Activated CD4-positive, alpha-beta T cell treated with anti-CD3 and anti-CD28 coated beads, Interleukin-2, amount 10 ng/mL, durations not matched to agents 24 days and 14 days (primary cell): ENCODE measurements at regions of chr19 and their contacts with region 1.

Region 1: GRCh38 chr19:6516659-6517291 is 14.1 kb upstream of the TNFSF9 start:
- DNase-seq: peak; percentile 97
- H3K4me3 Mint-ChIP-seq: peak overlapping the region; percentile 94
- H3K27ac Mint-ChIP-seq: peak overlapping the region; percentile 95
- H3K4me1 Mint-ChIP-seq: peaks cover 34% of the 10 kb centered on the region
- H3K27me3 Mint-ChIP-seq: no peaks in the 10 kb centered on the region

Region 2: GRCh38 chr19:6450166-6450565 is 66.6 kb before region 1 on chr19:
- intact Hi-C with region 1: no loop called
- DNase-seq: no peak
- H3K4me3 Mint-ChIP-seq: no peak overlapping the region
- H3K27ac Mint-ChIP-seq: no peak overlapping the region
- H3K4me1 Mint-ChIP-seq: peaks cover 2% of the 10 kb centered on the region
- H3K27me3 Mint-ChIP-seq: no peaks in the 10 kb centered on the region

Region 3: DNA sequence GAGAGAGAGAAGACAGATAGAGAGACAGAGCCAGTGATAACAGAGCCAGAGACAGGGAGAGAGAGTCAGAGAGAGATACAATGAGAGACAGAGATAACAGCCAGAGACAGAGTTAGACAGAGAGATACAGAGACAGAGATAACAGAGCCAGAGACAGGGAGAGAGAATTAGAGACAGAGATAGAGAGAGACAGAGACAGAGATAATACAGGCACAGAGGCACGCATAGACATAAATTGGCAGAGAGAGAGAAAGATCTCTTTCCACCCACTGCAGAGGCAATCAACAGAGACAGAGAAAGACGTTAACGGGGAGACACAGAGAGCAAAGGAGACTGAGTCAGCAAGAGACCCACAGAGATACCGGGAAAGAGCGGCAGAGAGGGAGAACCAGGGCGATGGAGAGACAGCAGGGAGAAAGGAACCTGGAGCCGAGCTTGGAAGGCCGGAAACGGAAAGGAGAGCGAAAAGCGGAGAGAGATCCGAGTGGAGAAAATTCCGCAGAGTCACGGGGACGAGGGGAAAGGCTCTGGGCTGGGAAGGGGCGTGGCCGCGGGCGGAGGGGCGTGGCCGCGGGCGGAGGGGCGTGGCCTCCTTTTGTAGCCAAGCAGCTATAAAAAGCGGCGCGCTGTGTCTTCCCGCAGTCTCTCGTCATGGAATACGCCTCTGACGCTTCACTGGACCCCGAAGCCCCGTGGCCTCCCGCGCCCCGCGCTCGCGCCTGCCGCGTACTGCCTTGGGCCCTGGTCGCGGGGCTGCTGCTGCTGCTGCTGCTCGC is 13.8 kb after region 1 on chr19 and contains the start of gene TNFSF9:
- intact Hi-C with region 1: loop called (anchors 1 kb)
- DNase-seq: peak; percentile 95
- H3K4me3 Mint-ChIP-seq: peak within 1 kb of the TSS; percentile 87
- H3K27ac Mint-ChIP-seq: peak within 1 kb of the TSS; percentile 84
- H3K4me1 Mint-ChIP-seq: peaks cover 31% of the 10 kb centered on the region
- H3K27me3 Mint-ChIP-seq: peaks cover 36% of the 10 kb centered on the region
- total RNA-seq, gene TNFSF9: 6.1 and 6.4 TPM in 2 replicates

Region 4: DNA sequence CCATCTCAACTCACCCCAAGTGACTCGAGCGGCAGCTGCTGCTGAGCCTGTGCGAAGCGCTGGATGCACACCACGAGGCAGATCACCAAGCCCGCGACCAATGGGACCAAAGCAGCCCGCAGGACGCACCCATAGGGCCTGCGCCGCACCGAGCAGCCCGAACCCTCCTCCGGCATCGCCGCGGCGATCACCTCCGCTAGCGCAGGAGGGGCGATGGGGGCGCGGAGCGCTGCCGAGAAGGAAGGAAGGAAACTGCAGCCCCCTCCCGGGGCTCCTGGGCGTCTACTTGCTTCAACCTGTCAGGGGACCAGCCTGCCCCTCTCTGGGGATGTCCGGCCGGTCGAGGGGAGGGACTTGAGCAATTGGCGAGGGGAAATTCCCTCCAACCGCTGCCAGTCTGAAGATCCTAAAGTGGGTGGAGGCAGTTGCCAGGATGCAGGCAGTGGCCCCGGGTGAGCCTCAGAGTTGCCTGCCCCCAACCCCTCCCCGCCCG is 74.1 kb after region 1 on chr19 and contains the start of gene CD70:
- intact Hi-C with region 1: loop called (anchors 2 kb)
- DNase-seq: peak; percentile 89
- H3K4me3 Mint-ChIP-seq: peak within 1 kb of the TSS; percentile 91
- H3K27ac Mint-ChIP-seq: peak within 1 kb of the TSS; percentile 79
- H3K4me1 Mint-ChIP-seq: peaks cover 60% of the 10 kb centered on the region
- H3K27me3 Mint-ChIP-seq: peaks cover 44% of the 10 kb centered on the region
- total RNA-seq, gene CD70: 46.8 and 47.4 TPM in 2 replicates

Region 5: DNA sequence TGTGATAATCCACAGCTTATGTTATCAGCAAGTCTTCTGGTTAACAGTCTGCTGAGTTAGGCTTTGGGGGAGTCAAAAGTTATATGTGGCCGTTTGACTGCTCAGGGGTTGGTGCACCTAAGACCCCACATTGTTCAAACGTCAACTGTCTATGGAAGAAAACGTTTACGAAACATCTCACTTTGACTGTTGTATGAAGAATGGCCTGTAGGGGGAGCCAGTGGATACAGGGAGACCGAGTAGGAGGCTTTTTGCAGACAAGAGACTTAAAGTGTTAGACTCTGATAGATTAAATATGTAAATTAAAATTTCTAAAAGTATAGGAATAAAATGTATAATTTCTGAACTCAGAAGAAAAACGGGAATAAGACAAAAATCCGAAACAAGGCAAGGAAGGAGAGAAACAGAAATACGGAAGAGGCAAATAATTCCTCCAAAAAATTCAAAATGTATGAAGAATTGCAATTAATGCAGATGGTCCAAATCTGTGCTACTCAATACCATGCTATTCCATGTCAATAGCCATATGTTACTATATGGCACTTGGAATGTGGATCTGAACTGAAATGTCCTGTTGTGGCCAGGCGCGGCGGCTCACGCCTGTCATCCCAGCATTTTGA is 115.3 kb after region 1 on chr19:
- intact Hi-C with region 1: loop called (anchors 1 kb)
- DNase-seq: peak; percentile 96
- H3K4me3 Mint-ChIP-seq: no peak overlapping the region
- H3K27ac Mint-ChIP-seq: no peak overlapping the region
- H3K4me1 Mint-ChIP-seq: peaks cover 26% of the 10 kb centered on the region
- H3K27me3 Mint-ChIP-seq: peaks cover 2% of the 10 kb centered on the region

Region 6: GRCh38 chr19:6753178-6754031 is 236.6 kb after region 1 on chr19:
- intact Hi-C with region 1: loop called (anchors 5 kb)
- DNase-seq: peak; percentile 95
- H3K4me3 Mint-ChIP-seq: peak overlapping the region; percentile 81
- H3K27ac Mint-ChIP-seq: peak overlapping the region; percentile 96
- H3K4me1 Mint-ChIP-seq: peaks cover 15% of the 10 kb centered on the region
- H3K27me3 Mint-ChIP-seq: no peaks in the 10 kb centered on the region

Region 7: DNA sequence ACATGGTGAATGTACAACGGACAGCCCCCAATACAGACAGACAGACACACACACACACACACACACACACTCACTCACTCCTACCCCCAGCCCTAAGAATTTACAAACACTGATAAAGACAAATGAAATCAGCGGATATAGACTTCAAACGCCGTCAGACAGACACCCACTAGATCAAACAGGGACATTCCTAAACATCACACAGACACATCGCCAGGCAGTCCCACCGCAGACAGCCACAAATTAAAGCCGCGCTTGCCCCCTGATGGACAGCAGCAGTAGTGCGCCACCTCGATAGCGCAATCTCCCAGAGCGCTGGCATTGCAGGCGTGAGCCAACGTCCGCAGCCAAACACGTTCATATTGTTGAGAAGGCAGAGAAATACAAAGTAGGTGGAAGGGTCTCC is 345.9 kb after region 1 on chr19:
- intact Hi-C with region 1: loop called (anchors 1 kb)
- DNase-seq: peak; percentile 97
- H3K4me3 Mint-ChIP-seq: peak overlapping the region; percentile 84
- H3K27ac Mint-ChIP-seq: peak overlapping the region; percentile 68
- H3K4me1 Mint-ChIP-seq: peaks cover 17% of the 10 kb centered on the region
- H3K27me3 Mint-ChIP-seq: no peaks in the 10 kb centered on the region